HepG2 (cell line): ENCODE measurements at regions of chr2 and their contacts with region 1.

Region 1: DNA sequence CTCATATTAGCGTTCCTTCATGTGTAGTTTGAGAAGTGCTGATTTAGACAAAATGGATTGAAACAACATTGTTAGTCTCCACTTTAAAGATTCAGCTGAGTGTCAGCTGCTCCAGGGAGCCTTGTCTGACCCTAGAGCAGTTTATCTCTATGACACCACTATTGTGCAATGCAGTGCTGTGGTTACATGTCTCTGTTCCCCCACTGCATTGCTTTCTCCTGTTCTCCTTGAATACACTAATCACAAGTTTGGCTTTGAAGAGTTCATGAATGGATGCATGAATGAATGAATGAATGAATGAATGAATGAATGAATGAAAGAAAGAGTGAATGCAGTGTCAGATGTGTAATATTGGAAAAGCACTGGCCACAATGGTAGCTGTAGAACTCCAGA is 38.3 kb downstream of the GCG start:
- DNase-seq: peak; percentile 85
- ATAC-seq: peak; percentile 84
- H3K4me3 ChIP-seq: peak overlapping the region in 1 of 3 experiments; percentile 34; a peak in 2 of 6 replicates
- H3K27ac ChIP-seq: peak overlapping the region; percentile 73
- H3K4me1 ChIP-seq: peaks cover 70% of the 10 kb centered on the region
- H3K27me3 ChIP-seq: no peaks in the 10 kb centered on the region
- CTCF ChIP-seq: no peak
- EP300 ChIP-seq: peak; percentile 82 to 92; a peak in 3 of 4 replicates
- POLR2A ChIP-seq: no peak
- RAD21 ChIP-seq: no peak

Region 2: DNA sequence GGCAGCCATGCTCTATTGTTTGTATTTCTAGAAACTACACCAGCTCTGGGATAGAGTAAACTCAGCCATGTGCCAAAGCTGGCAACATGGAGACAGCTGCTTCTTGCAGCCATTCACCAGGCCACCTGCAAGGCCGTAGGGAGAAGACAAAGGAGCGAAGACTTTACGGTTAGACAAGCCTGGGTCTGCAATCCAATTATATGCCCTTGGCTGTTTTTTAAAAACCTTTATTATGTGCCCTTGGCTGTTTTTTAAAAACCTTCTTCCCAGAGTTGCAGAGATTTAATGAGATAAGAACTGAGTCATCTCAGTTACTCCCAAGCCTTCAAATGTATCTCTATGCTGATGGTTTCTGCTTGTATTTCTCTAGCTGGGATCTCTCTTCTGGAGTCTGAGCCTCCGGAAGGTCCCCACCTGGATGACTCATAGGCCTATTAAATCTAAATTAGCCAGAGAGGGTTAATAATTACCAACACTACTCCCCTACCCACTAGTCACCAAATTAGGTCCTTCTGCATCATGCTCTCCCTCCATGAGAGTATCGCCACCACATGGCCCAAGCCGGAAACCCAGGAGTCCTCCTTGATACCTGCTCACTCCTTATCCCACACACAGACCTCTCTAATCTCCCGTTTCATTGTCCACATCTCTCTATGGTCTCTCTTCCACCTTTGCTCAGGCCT is 22.3 kb before region 1 on chr2:
- CTCF ChIA-PET with region 1: no interaction called
- POLR2A ChIA-PET with region 1: no interaction called
- in situ Hi-C with region 1: no loop called
- intact Hi-C with region 1: loop called (anchors 2 kb)
- DNase-seq: peak; percentile 81
- ATAC-seq: peak; percentile 87
- H3K4me3 ChIP-seq: no peak overlapping the region
- H3K27ac ChIP-seq: no peak overlapping the region
- H3K4me1 ChIP-seq: peaks cover 52% of the 10 kb centered on the region
- H3K27me3 ChIP-seq: no peaks in the 10 kb centered on the region
- CTCF ChIP-seq: peak; percentile 70
- EP300 ChIP-seq: peak in 1 of 2 experiments; percentile 34; a peak in 1 of 4 replicates
- POLR2A ChIP-seq: no peak
- RAD21 ChIP-seq: peak; percentile 42; the same call in 1 of the 2 replicates

Region 3: DNA sequence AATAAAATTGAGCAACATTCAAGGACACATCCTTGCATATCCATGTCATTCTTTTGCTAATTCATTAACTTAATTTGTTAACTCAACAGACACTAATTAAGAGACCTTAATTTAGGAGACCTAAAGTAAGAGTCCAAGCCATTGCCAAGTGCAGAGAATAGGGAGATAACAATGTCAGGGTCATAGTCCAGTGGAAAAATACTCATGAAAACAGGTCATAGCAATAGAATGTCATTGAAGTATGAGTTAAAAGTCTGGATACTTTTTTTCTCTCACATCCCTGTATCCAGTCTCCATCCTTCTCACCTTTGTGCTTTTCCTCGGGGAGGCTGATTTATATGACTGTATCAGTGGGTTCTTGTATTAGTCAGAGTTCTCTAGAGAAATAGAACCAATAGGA is 13.2 kb before region 1 on chr2:
- CTCF ChIA-PET with region 1: no interaction called
- POLR2A ChIA-PET with region 1: interaction called, 4 read pairs
- in situ Hi-C with region 1: no loop called
- intact Hi-C with region 1: loop called (anchors 1 kb)
- DNase-seq: peak; percentile 85
- ATAC-seq: peak; percentile 80
- H3K4me3 ChIP-seq: no peak overlapping the region
- H3K27ac ChIP-seq: no peak overlapping the region
- H3K4me1 ChIP-seq: peaks cover 42% of the 10 kb centered on the region
- H3K27me3 ChIP-seq: no peaks in the 10 kb centered on the region
- CTCF ChIP-seq: no peak
- EP300 ChIP-seq: peak in 1 of 2 experiments; percentile 82; a peak in 1 of 4 replicates
- POLR2A ChIP-seq: no peak
- RAD21 ChIP-seq: 0 out of 2 replicates have a peak, but pooled peaks have one; percentile 25